ENCODE measurements at regions of chr2 and their contacts with region 1.

Region 1: GRCh38 chr2:17830053-17831034 is 14.1 kb downstream of the MSGN1 start:
- DNase-seq: no peak
- ATAC-seq: peak; percentile 95
- H3K4me3 ChIP-seq: peak overlapping the region; percentile 22; the same call in 1 of the 2 replicates
- H3K27ac ChIP-seq: no peak overlapping the region
- H3K4me1 ChIP-seq: peaks cover 4% of the 10 kb centered on the region; the same call in 1 of the 2 replicates
- H3K27me3 ChIP-seq: no peaks in the 10 kb centered on the region
- CTCF ChIP-seq: peak; percentile 85 to 93 (median 90)
- EP300 ChIP-seq: no peak
- POLR2A ChIP-seq: no peak
- RAD21 ChIP-seq: peak; percentile 88

Region 2: GRCh38 chr2:17709897-17710296 is 120.4 kb before region 1 on chr2:
- CTCF ChIA-PET with region 1: interaction called, 130 read pairs
- POLR2A ChIA-PET with region 1: no interaction called
- RAD21 ChIA-PET with region 1: no interaction called
- SMC1A ChIA-PET with region 1: interaction called, 11 read pairs
- in situ Hi-C with region 1: loop called (anchors 5 kb)
- intact Hi-C with region 1: no loop called
- DNase-seq: no peak
- ATAC-seq: no peak
- H3K4me3 ChIP-seq: no peak overlapping the region
- H3K27ac ChIP-seq: no peak overlapping the region
- H3K4me1 ChIP-seq: no peaks in the 10 kb centered on the region
- H3K27me3 ChIP-seq: no peaks in the 10 kb centered on the region
- CTCF ChIP-seq: no peak
- EP300 ChIP-seq: no peak
- POLR2A ChIP-seq: no peak
- RAD21 ChIP-seq: no peak

Region 3: GRCh38 chr2:17736989-17737388 is 93.4 kb before region 1 on chr2:
- CTCF ChIA-PET with region 1: interaction called, 23 read pairs
- POLR2A ChIA-PET with region 1: no interaction called
- RAD21 ChIA-PET with region 1: no interaction called
- SMC1A ChIA-PET with region 1: interaction called, 9 read pairs
- in situ Hi-C with region 1: no loop called
- intact Hi-C with region 1: no loop called
- DNase-seq: no peak
- ATAC-seq: no peak
- H3K4me3 ChIP-seq: no peak overlapping the region
- H3K27ac ChIP-seq: no peak overlapping the region
- H3K4me1 ChIP-seq: no peaks in the 10 kb centered on the region
- H3K27me3 ChIP-seq: no peaks in the 10 kb centered on the region
- CTCF ChIP-seq: no peak
- EP300 ChIP-seq: no peak
- POLR2A ChIP-seq: no peak
- RAD21 ChIP-seq: no peak

Region 4: GRCh38 chr2:17759805-17760204 is 70.5 kb before region 1 on chr2:
- CTCF ChIA-PET with region 1: interaction called, 79 read pairs
- POLR2A ChIA-PET with region 1: interaction called, 3 read pairs
- RAD21 ChIA-PET with region 1: interaction called, 28 read pairs
- SMC1A ChIA-PET with region 1: interaction called, 60 read pairs
- in situ Hi-C with region 1: no loop called
- intact Hi-C with region 1: loop called (anchors 2 kb)
- DNase-seq: no peak
- ATAC-seq: no peak
- H3K4me3 ChIP-seq: no peak overlapping the region
- H3K27ac ChIP-seq: no peak overlapping the region
- H3K4me1 ChIP-seq: 0 out of 2 replicates have a peak, but pooled peaks cover 3% of the 10 kb centered on the region
- H3K27me3 ChIP-seq: no peaks in the 10 kb centered on the region
- CTCF ChIP-seq: no peak
- EP300 ChIP-seq: no peak
- POLR2A ChIP-seq: no peak
- RAD21 ChIP-seq: no peak

Region 5: DNA sequence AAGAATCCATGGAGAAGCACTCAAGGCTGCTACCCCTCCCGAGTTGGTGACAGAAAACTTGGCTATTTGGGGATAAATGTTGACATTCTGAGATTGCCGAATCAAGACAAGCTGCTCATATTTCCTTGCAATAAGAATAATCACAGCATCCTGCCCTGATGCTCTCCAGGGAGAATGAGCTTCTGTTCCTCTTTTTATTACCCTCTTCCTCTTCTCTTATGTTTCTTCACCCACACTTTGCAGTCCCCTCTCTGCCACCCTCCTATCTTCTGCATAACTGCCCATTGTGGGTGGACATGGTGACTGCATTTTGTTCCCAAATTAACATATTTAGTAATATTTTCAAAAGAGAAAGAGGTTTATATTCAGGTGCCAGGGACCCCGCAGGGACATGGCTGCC is 26.0 kb before region 1 on chr2:
- CTCF ChIA-PET with region 1: interaction called, 77 read pairs
- POLR2A ChIA-PET with region 1: interaction called, 3 read pairs
- RAD21 ChIA-PET with region 1: interaction called, 4 read pairs
- SMC1A ChIA-PET with region 1: interaction called, 288 read pairs
- in situ Hi-C with region 1: no loop called
- intact Hi-C with region 1: no loop called
- DNase-seq: no peak
- ATAC-seq: peak; percentile 80
- H3K4me3 ChIP-seq: peak overlapping the region; percentile 22
- H3K27ac ChIP-seq: peak overlapping the region; percentile 41
- H3K4me1 ChIP-seq: peaks cover 24% of the 10 kb centered on the region
- H3K27me3 ChIP-seq: no peaks in the 10 kb centered on the region
- CTCF ChIP-seq: no peak
- EP300 ChIP-seq: peak in 1 of 2 experiments; percentile 88; a peak in 2 of 4 replicates
- POLR2A ChIP-seq: no peak
- RAD21 ChIP-seq: no peak

Region 6: DNA sequence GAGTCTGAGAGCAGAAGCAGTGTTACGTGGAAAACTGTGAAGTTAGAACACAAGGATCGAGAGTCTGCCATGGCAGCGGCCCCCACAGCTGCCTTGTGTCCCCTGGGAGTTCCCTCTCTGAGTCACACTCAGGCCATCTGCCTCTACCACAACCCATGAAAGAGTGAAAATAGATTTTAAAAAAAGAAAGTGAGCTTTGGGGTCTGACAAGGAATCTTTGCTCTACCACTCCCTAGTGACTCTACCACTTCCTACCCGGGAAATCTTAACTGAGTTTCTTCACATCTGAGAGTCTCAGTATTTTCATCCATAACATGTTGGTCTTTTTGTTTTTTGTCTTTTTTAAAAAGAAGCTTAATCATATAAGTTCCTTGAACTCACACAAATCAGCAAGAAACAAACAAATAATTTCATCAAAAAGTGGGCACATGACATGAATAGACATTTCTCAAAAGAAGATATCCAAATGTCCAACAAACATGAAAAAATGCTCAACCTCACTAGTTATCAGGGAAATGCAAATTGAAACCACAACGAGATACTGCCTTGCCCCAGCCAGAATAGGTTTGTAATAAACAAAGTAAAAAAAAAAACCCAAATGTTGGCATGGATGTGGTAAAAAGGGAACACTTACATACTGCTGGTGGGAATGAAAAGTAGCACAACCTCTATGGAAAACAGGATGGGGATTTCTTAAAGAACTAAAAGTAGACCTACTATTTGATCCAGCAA is 16.4 kb before region 1 on chr2:
- CTCF ChIA-PET with region 1: interaction called, 12 read pairs
- POLR2A ChIA-PET with region 1: interaction called, 7 read pairs
- RAD21 ChIA-PET with region 1: interaction called, 6 read pairs
- SMC1A ChIA-PET with region 1: interaction called, 288 read pairs
- in situ Hi-C with region 1: no loop called
- intact Hi-C with region 1: no loop called
- DNase-seq: peak; percentile 82
- ATAC-seq: peak; percentile 86
- H3K4me3 ChIP-seq: 0 out of 2 replicates have a peak overlapping the region, but pooled peaks have one; percentile 11
- H3K27ac ChIP-seq: peak overlapping the region; percentile 81
- H3K4me1 ChIP-seq: peaks cover 36% of the 10 kb centered on the region
- H3K27me3 ChIP-seq: no peaks in the 10 kb centered on the region
- CTCF ChIP-seq: no peak
- EP300 ChIP-seq: peak; percentile 31 to 80; a peak in 3 of 4 replicates
- POLR2A ChIP-seq: no peak
- RAD21 ChIP-seq: 0 out of 2 replicates have a peak, but pooled peaks have one; percentile 3

Region 7: DNA sequence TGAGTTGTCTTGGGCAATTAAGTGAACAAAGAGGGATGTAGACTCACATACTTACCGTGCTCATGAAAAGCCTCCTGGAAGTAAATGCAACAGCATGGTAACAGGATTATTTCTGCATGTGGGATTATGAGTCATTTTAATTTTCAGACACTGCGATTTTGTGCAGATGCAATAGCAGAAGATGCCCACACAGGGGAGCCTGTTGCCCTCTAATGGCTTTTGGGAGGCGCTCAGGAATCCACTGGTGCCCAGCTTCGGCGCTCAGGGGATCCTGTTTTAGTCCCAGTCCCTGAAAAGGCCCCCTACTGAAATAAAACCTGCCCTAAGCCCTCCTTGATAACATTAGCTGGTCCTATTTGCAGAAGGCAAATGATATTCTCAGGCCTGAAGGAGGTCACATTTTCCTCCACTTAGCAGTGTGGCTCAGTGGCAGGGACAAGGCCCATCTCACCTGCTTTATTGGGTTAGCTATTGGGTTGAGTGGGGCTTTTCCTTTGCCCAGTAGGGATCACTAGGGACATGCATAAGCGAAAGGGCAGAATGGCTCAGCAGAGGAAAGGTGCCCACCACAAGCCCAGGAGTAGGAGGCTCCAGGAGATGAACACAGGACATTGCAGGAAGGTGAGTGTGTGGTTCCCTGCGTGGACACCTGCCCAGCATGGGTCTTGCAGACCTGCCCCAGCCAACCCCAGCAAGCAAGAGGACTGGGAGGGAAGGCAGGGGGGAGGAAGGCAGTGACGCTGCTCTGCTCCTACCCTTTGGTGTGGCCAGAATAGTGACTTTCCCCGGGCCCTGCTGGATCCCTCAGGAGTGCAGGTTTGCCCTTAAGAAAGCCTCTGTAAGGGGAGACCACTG is 21.6 kb after region 1 on chr2:
- CTCF ChIA-PET with region 1: interaction called, 33 read pairs
- POLR2A ChIA-PET with region 1: no interaction called
- RAD21 ChIA-PET with region 1: interaction called, 3 read pairs
- SMC1A ChIA-PET with region 1: interaction called, 3 read pairs
- in situ Hi-C with region 1: no loop called
- intact Hi-C with region 1: no loop called
- DNase-seq: no peak
- ATAC-seq: peak; percentile 92
- H3K4me3 ChIP-seq: no peak overlapping the region
- H3K27ac ChIP-seq: no peak overlapping the region
- H3K4me1 ChIP-seq: no peaks in the 10 kb centered on the region
- H3K27me3 ChIP-seq: no peaks in the 10 kb centered on the region; a peak in 1 of 4 replicates
- CTCF ChIP-seq: peak; percentile 88 to 90 (median 89)
- EP300 ChIP-seq: no peak
- POLR2A ChIP-seq: no peak
- RAD21 ChIP-seq: peak; percentile 93